Activated CD8-positive, alpha-beta T cell treated with anti-CD3 and anti-CD28 coated beads for 36 hours (primary cell): ENCODE measurements at regions of chr22 and their contacts with region 1.

Region 1: DNA sequence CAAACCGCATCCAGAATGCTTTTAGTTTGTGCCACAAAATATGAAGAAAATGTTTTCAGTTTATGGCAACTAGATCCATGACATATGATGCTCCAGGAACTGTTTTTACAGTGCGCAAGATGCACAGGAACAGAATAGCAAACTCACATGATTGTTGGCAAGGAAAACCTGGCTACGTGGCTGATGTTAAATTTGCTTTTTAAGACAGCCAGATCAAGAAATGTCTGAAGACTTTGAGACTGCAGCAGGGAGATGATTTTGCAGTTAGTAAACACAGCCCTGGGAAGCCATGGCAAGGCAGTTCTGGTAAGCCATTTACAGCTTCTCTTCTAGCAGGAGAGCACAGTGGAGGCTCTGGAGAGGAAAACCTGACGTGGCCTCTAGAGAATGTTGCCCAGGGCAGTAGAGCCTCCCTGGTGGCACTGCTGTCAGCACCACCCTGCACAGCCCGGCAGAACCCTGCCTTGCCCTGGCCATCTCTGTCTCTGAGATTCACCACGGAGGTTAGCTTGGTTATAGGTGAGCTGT is 69.8 kb upstream of the TNRC6B start:
- DNase-seq: peak; percentile 65
- ATAC-seq: peak; percentile 78
- H3K4me3 Mint-ChIP-seq: peak overlapping the region; percentile 73
- H3K27ac Mint-ChIP-seq: peak overlapping the region; percentile 90
- H3K4me1 Mint-ChIP-seq: peaks cover 79% of the 10 kb centered on the region
- H3K27me3 Mint-ChIP-seq: no peaks in the 10 kb centered on the region
- CTCF ChIP-seq: no peak

Region 2: DNA sequence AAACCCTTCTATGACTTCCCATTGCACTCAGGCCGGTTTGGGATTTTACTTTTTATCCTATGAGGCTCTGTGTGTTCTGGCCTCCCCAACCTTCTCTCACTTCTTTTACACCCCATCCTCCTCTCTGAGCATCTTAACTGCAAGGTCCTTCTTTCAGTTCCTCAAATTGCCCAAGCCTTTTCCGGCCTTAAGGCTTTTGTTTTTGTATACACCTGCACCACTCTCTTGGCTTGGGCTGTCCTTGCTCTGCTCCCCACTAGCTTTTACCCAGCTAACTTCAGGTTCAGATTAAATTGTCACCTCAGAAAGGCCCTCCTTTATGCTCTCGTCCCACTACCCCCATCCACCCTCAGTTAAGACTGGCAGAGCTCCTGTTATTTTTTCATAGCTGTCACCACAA is 57.7 kb before region 1 on chr22:
- CTCF ChIA-PET with region 1: interaction called, 3 read pairs
- POLR2A ChIA-PET with region 1: interaction called, 7 read pairs
- intact Hi-C with region 1: loop called (anchors 5 kb)
- DNase-seq: no peak
- ATAC-seq: no peak
- H3K4me3 Mint-ChIP-seq: peak overlapping the region; percentile 4
- H3K27ac Mint-ChIP-seq: peak overlapping the region; percentile 80
- H3K4me1 Mint-ChIP-seq: peaks cover 66% of the 10 kb centered on the region
- H3K27me3 Mint-ChIP-seq: no peaks in the 10 kb centered on the region
- CTCF ChIP-seq: no peak